Activated CD8-positive, alpha-beta T cell treated with anti-CD3 and anti-CD28 coated beads for 36 hours (primary cell): ENCODE measurements at regions of chr2 and their contacts with region 1.

Region 1: DNA sequence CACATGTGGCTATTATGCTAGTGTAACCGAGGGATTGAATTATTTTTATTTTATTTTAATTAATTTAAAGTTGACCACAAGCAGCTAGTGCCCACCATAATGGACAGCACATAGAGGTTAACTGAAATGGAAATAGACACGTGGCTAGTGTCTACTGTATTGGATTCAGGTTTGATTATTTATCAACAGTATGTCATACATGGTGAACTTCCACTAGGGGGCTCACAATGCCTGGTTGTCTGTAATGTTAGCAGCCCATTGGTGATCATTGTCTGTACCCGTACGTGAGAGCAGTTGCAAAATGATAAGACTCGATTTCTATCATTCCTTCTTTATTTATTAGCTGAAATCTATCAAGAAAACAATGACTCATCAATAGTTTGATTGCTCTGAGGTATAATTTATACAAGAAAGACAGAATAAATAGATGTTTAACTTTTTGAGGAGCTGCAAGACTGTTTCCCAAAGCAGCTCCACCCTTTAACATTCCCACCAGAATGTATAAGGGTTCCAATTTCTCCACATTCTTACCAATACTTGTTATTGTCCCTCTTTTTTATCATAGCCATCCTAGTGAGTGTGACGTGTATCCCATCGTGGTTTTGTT is 76.5 kb downstream of the CYBRD1 start:
- DNase-seq: peak; percentile 63
- ATAC-seq: peak; percentile 100
- H3K4me3 Mint-ChIP-seq: no peak overlapping the region
- H3K27ac Mint-ChIP-seq: no peak overlapping the region
- H3K4me1 Mint-ChIP-seq: peaks cover 2% of the 10 kb centered on the region
- H3K27me3 Mint-ChIP-seq: peaks cover 4% of the 10 kb centered on the region
- CTCF ChIP-seq: peak; percentile 79

Region 2: GRCh38 chr2:171452773-171453172 is 146.0 kb before region 1 on chr2:
- CTCF ChIA-PET with region 1: no interaction called
- POLR2A ChIA-PET with region 1: no interaction called
- intact Hi-C with region 1: no loop called
- DNase-seq: no peak
- ATAC-seq: no peak
- H3K4me3 Mint-ChIP-seq: no peak overlapping the region
- H3K27ac Mint-ChIP-seq: no peak overlapping the region
- H3K4me1 Mint-ChIP-seq: peaks cover 2% of the 10 kb centered on the region
- H3K27me3 Mint-ChIP-seq: no peaks in the 10 kb centered on the region
- CTCF ChIP-seq: no peak

Region 3: DNA sequence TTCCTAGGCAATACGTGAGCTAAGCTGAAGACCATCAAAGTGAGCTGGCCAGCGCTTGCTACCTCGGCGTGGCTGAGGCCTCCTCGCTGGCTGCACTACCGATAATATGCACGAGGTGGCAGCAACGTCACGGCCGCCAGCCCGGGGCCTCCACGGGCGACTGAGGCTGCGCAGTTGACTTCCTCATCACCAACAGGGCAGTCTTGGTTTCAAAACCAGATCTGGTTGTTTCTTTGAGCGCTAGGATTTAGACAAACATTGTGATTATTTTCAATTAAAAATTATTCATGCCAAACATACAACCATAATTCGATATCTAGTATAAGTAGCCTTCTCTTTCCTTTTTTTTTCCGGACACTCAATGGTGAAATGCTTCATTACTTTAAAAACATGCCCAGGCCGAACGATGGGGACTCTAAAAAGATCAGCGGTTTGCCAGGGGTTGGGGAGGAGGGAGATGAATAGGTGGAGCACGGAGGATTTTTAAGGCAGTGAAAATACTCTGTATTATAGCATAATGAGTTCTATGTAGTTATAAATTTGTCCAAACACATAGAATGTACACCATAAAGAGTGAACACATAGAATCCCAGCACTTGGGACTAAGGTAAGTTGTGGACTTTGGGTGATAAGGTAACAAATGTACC is 24.5 kb before region 1 on chr2:
- CTCF ChIA-PET with region 1: interaction called, 14 read pairs
- POLR2A ChIA-PET with region 1: no interaction called
- intact Hi-C with region 1: no loop called
- DNase-seq: peak; percentile 86
- ATAC-seq: peak; percentile 100
- H3K4me3 Mint-ChIP-seq: no peak overlapping the region
- H3K27ac Mint-ChIP-seq: no peak overlapping the region
- H3K4me1 Mint-ChIP-seq: peaks cover 4% of the 10 kb centered on the region
- H3K27me3 Mint-ChIP-seq: no peaks in the 10 kb centered on the region
- CTCF ChIP-seq: peak; percentile 95

Region 4: GRCh38 chr2:171587567-171587966 is 11.2 kb before region 1 on chr2:
- CTCF ChIA-PET with region 1: interaction called, 28 read pairs
- POLR2A ChIA-PET with region 1: no interaction called
- intact Hi-C with region 1: no loop called
- DNase-seq: no peak
- ATAC-seq: no peak
- H3K4me3 Mint-ChIP-seq: no peak overlapping the region
- H3K27ac Mint-ChIP-seq: no peak overlapping the region
- H3K4me1 Mint-ChIP-seq: no peaks in the 10 kb centered on the region
- H3K27me3 Mint-ChIP-seq: peaks cover 10% of the 10 kb centered on the region
- CTCF ChIP-seq: no peak

Region 5: DNA sequence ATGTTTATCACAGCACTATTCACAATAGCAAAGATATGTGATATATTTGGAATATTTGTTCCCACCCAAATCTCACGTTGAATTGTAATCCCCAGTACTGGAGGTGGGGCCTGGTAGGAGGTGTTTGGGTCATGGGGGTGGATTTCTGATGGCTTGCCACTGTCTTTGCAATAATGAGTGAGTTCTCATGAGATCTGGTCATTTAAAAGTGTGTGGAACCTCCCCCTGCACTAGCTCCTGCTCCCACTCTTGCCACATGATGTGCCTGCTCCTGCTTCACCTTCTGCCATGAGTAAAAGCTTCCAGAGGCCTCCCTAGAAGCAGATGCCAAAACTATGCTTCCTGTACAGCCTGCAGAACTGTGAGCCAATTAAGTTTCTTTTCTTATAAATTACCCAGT is 16.3 kb after region 1 on chr2:
- CTCF ChIA-PET with region 1: interaction called, 14 read pairs
- POLR2A ChIA-PET with region 1: interaction called, 3 read pairs
- intact Hi-C with region 1: no loop called
- DNase-seq: no peak
- ATAC-seq: no peak
- H3K4me3 Mint-ChIP-seq: no peak overlapping the region
- H3K27ac Mint-ChIP-seq: no peak overlapping the region
- H3K4me1 Mint-ChIP-seq: no peaks in the 10 kb centered on the region
- H3K27me3 Mint-ChIP-seq: no peaks in the 10 kb centered on the region
- CTCF ChIP-seq: no peak

Region 6: DNA sequence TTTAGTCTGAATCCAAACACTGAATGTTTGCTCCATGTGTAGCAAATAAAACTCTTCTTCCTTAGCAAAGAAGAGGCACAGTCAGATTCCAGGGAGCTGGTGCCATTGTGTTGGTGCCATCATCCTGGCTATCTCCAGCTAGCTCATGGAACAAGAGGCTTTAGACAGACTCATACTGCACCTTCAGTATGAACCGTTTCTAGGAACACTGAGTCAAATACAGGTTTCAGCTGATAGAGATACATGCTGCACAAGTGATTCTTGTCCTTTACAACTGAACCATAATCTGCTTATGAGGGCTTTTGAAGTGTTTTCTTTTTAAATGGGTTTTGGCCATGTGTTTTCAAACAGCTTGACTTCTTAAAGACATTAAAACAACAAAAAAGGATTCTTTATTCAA is 146.3 kb after region 1 on chr2:
- CTCF ChIA-PET with region 1: no interaction called
- POLR2A ChIA-PET with region 1: no interaction called
- intact Hi-C with region 1: no loop called
- DNase-seq: no peak
- ATAC-seq: no peak
- H3K4me3 Mint-ChIP-seq: no peak overlapping the region
- H3K27ac Mint-ChIP-seq: no peak overlapping the region
- H3K4me1 Mint-ChIP-seq: peaks cover 8% of the 10 kb centered on the region
- H3K27me3 Mint-ChIP-seq: no peaks in the 10 kb centered on the region
- CTCF ChIP-seq: no peak

Region 7: GRCh38 chr2:172113617-172114016 is 514.8 kb after region 1 on chr2:
- CTCF ChIA-PET with region 1: interaction called, 10 read pairs
- POLR2A ChIA-PET with region 1: no interaction called
- intact Hi-C with region 1: loop called (anchors 10 kb)
- DNase-seq: no peak
- ATAC-seq: no peak
- H3K4me3 Mint-ChIP-seq: no peak overlapping the region
- H3K27ac Mint-ChIP-seq: no peak overlapping the region
- H3K4me1 Mint-ChIP-seq: no peaks in the 10 kb centered on the region
- H3K27me3 Mint-ChIP-seq: peaks cover 27% of the 10 kb centered on the region
- CTCF ChIP-seq: no peak

Region 8: DNA sequence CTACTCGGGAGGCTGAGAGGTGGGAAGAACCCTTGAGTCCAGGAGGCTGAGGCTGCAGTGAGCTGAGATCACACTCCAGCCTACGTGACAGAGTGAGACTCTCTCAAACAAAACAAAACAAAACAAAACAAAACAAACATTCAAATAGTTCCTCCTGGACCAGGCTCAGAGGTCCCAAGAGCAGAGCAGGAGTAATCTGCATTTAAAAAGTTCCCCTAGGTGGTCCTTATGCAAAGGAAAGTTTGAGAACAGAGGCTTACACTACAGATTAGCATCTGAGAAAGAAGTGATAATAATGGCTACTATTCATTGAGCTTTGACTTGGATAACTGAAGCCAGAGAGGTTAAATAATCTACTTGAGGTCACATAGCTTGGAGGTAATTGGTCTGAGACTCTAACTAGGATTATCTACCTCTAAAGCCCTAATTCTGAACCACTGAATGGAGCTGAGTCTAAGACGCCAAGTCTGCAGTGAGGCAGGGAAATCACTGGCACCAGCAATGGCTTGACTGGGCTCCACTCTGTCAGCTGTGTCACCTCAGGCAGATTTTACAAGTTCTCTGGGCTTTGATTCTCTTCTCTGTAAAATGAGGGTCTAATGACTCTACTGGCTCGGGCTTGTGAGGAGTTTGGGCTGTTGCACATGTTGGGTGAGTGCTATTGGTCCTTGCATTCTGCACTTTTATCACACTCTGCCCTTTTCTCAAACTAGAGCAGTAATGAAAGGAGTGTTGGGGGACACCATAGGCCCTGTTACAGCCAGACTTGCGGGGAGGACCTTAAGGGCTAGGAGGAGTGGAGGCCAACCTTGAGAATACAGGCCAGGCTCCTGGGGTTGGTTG is 533.1 kb after region 1 on chr2:
- CTCF ChIA-PET with region 1: interaction called, 12 read pairs
- POLR2A ChIA-PET with region 1: no interaction called
- intact Hi-C with region 1: no loop called
- DNase-seq: no peak
- ATAC-seq: no peak
- H3K4me3 Mint-ChIP-seq: no peak overlapping the region
- H3K27ac Mint-ChIP-seq: no peak overlapping the region
- H3K4me1 Mint-ChIP-seq: no peaks in the 10 kb centered on the region
- H3K27me3 Mint-ChIP-seq: peaks cover 3% of the 10 kb centered on the region
- CTCF ChIP-seq: no peak

Region 9: DNA sequence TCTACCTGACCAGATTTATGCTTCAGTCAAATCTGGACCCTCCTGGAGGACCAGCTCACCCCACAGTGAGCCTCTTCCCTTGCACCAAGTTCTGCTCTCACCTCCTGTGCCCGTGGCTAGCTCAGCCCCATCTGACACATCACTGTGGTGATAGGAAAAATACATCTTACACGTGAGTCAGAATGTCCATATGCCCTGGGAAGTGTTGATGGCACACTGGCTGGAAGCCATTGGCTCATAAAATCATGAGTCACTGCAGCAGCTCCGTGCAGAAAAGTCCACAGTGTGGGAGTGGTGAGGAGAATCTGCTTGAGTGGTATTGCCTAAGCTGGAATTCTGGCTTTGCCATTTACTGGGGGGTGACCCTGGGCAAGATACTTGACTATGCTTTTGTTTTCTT is 1094.2 kb after region 1 on chr2:
- CTCF ChIA-PET with region 1: no interaction called
- POLR2A ChIA-PET with region 1: no interaction called
- intact Hi-C with region 1: loop called (anchors 5 kb)
- DNase-seq: peak; percentile 71
- ATAC-seq: peak; percentile 92
- H3K4me3 Mint-ChIP-seq: no peak overlapping the region
- H3K27ac Mint-ChIP-seq: peak overlapping the region; percentile 23
- H3K4me1 Mint-ChIP-seq: peaks cover 34% of the 10 kb centered on the region
- H3K27me3 Mint-ChIP-seq: no peaks in the 10 kb centered on the region
- CTCF ChIP-seq: no peak